Activated naive CD4-positive, alpha-beta T cell treated with anti-CD3 and anti-CD28 coated beads for 36 hours (primary cell): ENCODE measurements at regions of chr7 and their contacts with region 1.

Region 1: GRCh38 chr7:149297034-149297755 is 35.2 kb downstream of the ZNF783 start:
- DNase-seq: peak; percentile 51
- H3K4me3 Mint-ChIP-seq: no peak overlapping the region
- H3K27ac Mint-ChIP-seq: peak overlapping the region; percentile 84
- H3K4me1 Mint-ChIP-seq: peaks cover 17% of the 10 kb centered on the region
- H3K27me3 Mint-ChIP-seq: no peaks in the 10 kb centered on the region

Region 2: GRCh38 chr7:149310113-149310836 is 13.1 kb after region 1 on chr7:
- CTCF ChIA-PET with region 1: interaction called, 10 read pairs
- intact Hi-C with region 1: no loop called
- DNase-seq: no peak
- H3K4me3 Mint-ChIP-seq: no peak overlapping the region
- H3K27ac Mint-ChIP-seq: no peak overlapping the region
- H3K4me1 Mint-ChIP-seq: peaks cover 2% of the 10 kb centered on the region
- H3K27me3 Mint-ChIP-seq: no peaks in the 10 kb centered on the region

Region 3: GRCh38 chr7:149321978-149322541 is 24.9 kb after region 1 on chr7:
- CTCF ChIA-PET with region 1: no interaction called
- intact Hi-C with region 1: loop called (anchors 1 kb)
- DNase-seq: no peak
- H3K4me3 Mint-ChIP-seq: peak overlapping the region; percentile 14
- H3K27ac Mint-ChIP-seq: no peak overlapping the region
- H3K4me1 Mint-ChIP-seq: peaks cover 19% of the 10 kb centered on the region
- H3K27me3 Mint-ChIP-seq: no peaks in the 10 kb centered on the region

Region 4: DNA sequence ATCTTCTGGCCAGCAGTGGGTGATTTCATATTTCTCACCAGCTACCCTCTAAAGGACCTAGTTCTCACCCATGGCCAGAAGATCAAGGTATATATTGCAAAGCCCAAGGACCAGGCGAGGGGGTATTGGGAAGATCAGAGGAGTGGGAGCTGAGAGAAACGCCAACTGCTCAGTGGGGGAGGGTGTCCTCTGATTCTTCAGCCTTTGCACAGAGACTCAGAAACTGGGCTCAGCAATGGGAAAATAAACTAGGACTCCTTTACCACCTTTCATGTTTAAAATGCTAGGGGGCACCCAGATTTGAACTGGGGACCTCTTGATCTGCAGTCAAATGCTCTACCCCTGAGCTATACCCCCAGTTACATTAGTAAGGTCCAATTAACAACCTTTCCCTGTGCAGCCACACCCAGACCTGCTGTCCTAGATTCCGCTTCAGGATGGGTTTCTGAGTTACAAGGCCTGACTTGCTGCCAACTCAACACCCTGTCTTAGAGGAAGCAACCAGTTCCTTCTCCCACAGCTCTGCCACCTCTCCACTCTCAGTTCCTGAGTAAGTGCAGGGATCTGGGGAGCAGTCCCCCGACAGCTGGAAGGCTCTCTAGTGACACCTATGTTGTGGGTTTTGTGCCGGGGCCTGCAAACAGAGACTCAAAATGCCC is 58.3 kb after region 1 on chr7:
- CTCF ChIA-PET with region 1: no interaction called
- intact Hi-C with region 1: no loop called
- DNase-seq: no peak
- H3K4me3 Mint-ChIP-seq: no peak overlapping the region
- H3K27ac Mint-ChIP-seq: no peak overlapping the region
- H3K4me1 Mint-ChIP-seq: no peaks in the 10 kb centered on the region
- H3K27me3 Mint-ChIP-seq: peaks cover 2% of the 10 kb centered on the region

Region 5: GRCh38 chr7:149598721-149599306 is 301.6 kb after region 1 on chr7:
- CTCF ChIA-PET with region 1: no interaction called
- intact Hi-C with region 1: loop called (anchors 1 kb)
- DNase-seq: peak; percentile 69
- H3K4me3 Mint-ChIP-seq: no peak overlapping the region
- H3K27ac Mint-ChIP-seq: peak overlapping the region; percentile 51
- H3K4me1 Mint-ChIP-seq: peaks cover 36% of the 10 kb centered on the region
- H3K27me3 Mint-ChIP-seq: no peaks in the 10 kb centered on the region